ENCODE measurements at regions of chr13 and their contacts with region 1.

Region 1: GRCh38 chr13:24875561-24875960 is 111.6 kb downstream of the RNF17 start:
- DNase-seq: no peak

Region 2: GRCh38 chr13:24865163-24865953 is 10.2 kb before region 1 on chr13:
- intact Hi-C with region 1: no loop called
- DNase-seq: no peak

Region 3: DNA sequence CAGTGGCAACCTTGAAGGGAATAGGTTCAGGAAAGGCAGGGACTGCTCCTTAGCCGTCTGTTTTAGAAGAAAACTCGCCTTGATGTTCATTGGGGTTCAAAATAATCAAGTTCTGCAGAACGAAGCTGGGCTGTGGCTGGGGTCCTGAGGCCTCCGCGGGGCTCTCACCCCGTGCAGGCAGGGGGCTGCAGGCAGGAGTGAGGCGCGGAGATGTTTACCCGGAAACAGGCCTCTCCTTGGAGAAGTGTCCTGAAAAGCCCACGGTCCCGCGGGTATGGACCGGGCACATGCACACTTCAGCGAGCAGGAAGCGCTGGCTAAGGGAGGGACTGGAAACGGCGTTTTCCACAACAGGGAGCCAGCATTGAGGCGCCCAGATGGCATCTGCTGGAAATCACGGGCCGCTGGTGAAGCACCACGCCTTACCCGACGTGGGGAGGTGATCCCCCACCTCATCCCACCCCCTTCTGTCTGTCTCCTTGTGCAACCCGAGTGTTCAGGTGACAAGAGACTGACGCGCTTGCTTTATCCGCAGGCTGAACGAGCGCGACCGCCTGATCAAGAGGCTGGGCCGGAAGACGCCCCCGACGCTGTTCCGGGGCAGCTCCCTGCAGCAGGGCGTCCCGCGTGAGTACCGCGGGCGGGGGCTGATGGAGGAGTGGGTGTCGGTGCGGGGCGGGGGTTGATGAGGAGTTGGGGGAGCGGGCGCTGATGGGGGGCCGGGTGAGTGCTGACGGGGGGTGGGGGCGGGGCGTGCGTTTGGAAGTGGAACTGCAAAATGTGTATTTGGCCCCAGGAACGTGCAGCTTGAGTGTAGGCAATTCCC is 1136.6 kb after region 1 on chr13:
- intact Hi-C with region 1: no loop called
- DNase-seq: no peak

Region 4: GRCh38 chr13:26721251-26722121 is 1845.9 kb after region 1 on chr13:
- intact Hi-C with region 1: loop called in 1 of 2 experiments (anchors 5 kb)
- DNase-seq: no peak

Measured in posterior vena cava (tissue), 2 donors.